Ascending aorta (tissue), 2 donors: ENCODE measurements at regions of chrX and their contacts with region 1.

Region 1: GRCh38 chrX:102768987-102769761 is 48.6 kb downstream of the GPRASP3 start:
- DNase-seq: peak; percentile 35 to 86
- H3K4me3 ChIP-seq: peak overlapping the region; percentile 52 to 54
- H3K27ac ChIP-seq: no peak overlapping the region
- H3K4me1 ChIP-seq: no peaks in the 10 kb centered on the region
- H3K27me3 ChIP-seq: no peaks in the 10 kb centered on the region
- CTCF ChIP-seq: no peak

Region 2: GRCh38 chrX:102515975-102516941 is 252.9 kb before region 1 on chrX and contains the start of gene TMSB15A:
- intact Hi-C with region 1: loop called (anchors 10 kb)
- DNase-seq: peak in 1 of 2 donors; percentile 79
- H3K4me3 ChIP-seq: peak within 1 kb of the TSS; percentile 43 to 64
- H3K27ac ChIP-seq: peak within 1 kb of the TSS; percentile 50 to 73
- H3K4me1 ChIP-seq: no peaks in the 10 kb centered on the region
- H3K27me3 ChIP-seq: no peaks in the 10 kb centered on the region
- CTCF ChIP-seq: no peak
- total RNA-seq, gene TMSB15A: not detected

Region 3: DNA sequence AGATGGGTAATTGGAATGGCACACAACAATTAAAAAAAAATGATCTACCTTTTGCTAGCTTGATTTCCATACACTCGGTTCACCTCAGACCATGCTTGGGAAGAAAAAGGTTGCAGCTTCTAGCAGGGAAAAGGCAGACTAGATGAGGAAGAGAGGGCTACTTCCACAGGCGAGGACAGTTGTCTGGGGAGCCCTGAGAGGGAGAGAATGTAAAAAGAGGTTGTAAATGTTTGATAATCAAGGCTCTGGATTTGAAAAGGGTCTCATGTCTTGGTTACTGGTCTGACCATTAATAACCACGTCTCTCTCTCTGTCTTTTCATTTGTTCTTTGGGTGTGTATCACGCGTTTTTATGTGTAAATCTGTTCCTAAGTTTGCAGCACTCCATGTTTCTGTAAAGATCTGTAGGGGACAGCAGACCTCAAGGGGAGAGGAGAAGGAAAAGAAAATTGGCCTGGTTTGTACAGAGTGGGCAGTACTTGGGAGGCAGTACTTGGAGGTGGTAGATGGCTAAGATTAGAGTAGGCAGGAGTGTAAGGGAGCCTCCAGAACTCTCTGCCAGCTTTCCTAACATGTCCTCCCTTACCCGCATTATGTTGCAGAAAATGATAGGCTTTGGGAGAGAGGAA is 169.1 kb before region 1 on chrX:
- intact Hi-C with region 1: loop called (anchors 5 kb)
- DNase-seq: no peak
- H3K4me3 ChIP-seq: peak overlapping the region; percentile 60 to 70
- H3K27ac ChIP-seq: peak overlapping the region; percentile 71 to 80
- H3K4me1 ChIP-seq: no peaks in the 10 kb centered on the region
- H3K27me3 ChIP-seq: no peaks in the 10 kb centered on the region
- CTCF ChIP-seq: no peak

Region 4: DNA sequence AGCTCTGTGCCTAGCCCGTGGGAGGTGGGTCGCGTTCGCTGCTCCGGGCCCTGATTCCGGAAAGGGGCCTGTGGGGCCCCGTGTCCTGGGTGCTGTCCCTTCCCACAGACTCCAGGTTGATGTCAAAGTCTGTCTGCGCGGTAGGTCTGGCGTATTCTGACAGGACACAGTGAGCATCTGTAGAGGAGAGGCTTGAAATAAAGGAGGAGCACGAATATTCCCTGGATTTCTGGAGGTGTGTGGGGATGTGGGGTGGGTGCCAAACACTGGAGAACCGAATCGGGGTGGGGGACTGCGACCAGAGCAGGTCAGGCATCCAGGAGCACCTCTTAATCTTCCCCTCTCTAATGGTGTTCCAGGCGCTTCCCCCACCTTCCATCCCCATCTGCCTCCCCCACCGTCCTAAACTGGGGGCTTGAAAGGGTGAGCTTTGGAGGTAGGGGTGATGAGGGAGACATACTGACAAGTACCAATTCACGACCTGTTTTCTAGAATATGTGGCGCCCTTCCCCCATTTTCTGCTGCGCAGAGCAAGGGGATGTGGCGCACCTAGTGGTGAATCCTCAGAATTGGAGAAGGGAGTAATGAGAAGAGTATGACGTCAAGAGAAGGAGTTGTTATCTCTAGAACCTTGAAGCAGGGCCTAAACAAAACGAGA is 117.0 kb before region 1 on chrX:
- intact Hi-C with region 1: loop called (anchors 2 kb)
- DNase-seq: peak in 1 of 2 donors; percentile 78
- H3K4me3 ChIP-seq: peak overlapping the region; percentile 59 to 72
- H3K27ac ChIP-seq: peak overlapping the region; percentile 73 to 75
- H3K4me1 ChIP-seq: no peaks in the 10 kb centered on the region
- H3K27me3 ChIP-seq: no peaks in the 10 kb centered on the region
- CTCF ChIP-seq: peak; percentile 38 to 61 (median 47)